HEK293T (cell line): ENCODE measurements at regions of chr5 and their contacts with region 1.

Region 1: DNA sequence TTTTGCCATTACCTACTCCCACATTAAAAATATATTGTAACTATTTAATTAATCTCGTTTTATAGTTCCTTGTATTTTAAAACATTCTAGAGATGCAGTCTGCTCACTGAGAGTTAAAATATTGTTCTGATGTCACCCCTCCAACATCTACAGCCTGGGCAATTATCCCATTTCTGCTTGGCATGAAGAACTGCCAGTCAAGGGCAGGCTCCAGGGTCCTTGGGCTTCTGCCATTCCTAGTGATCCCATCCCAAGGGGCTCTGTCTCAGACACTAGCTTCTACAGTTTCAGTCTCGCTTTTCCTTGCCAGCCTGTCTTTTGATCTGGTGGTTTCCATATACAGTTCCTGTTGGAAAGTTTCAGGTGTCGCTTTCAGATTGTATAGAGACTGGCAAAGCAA is 287.2 kb downstream of the TMEM232 start:
- DNase-seq: no peak

Region 2: GRCh38 chr5:109604758-109605157 is 834.5 kb before region 1 on chr5:
- CTCF ChIA-PET with region 1: interaction called, 11 read pairs
- POLR2A ChIA-PET with region 1: no interaction called
- DNase-seq: no peak

Region 3: DNA sequence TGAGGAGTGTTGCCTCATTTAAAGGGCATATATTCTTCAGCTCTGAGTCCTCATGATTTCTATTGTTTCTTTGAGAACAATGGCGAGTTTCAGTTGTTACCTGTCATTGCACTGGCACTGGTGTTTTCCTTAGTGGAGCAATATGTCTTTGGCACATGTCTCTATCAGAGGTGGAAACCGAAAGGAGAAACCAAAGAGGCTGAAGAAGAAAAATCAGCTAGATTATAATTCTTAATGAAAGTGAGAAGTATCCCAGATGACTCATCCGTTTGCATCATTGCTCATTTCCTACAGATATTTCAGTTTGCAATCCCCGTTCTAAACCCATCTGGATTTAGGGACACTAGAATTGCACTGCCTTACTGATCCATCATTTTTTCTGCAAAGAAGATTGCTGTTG is 37.4 kb before region 1 on chr5:
- CTCF ChIA-PET with region 1: no interaction called
- POLR2A ChIA-PET with region 1: no interaction called
- DNase-seq: no peak

Region 4: DNA sequence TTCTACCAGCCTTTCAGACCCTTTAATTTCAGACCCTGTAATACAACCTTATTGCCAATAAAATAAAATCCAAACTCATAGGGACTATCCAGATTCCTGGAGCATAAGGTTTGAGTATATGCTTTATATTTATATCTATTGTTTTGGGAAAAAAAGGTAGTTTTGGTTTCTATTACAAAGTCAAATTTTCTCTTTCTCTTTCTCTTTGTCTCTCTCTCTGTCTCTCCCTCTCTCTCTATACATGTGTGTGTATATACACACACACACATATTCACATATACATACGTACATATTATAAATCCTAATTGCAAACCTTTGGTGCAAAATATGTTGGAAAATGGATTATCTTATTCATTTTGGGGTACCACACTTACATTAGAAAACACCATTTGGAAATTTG is 248.2 kb after region 1 on chr5:
- CTCF ChIA-PET with region 1: no interaction called
- POLR2A ChIA-PET with region 1: no interaction called
- DNase-seq: no peak